ENCODE measurements at regions of chr20 and their contacts with region 1.

Region 1: GRCh38 chr20:46174469-46175128 is 56.5 kb downstream of the CD40 start:
- DNase-seq: peak; percentile 58 to 86 (median 77)
- ATAC-seq: peak in 3 of 4 donors; percentile 68 to 85 (median 80)
- H3K4me3 ChIP-seq: peak overlapping the region in 1 of 12 donors; percentile 33
- H3K27ac ChIP-seq: no peak overlapping the region
- H3K4me1 ChIP-seq: peaks cover 0 to 9% (median 0%) of the 10 kb centered on the region in 12 donors
- H3K27me3 ChIP-seq: peaks cover 18 to 62% (median 34%) of the 10 kb centered on the region in 9 donors
- CTCF ChIP-seq: peak; percentile 45 to 85 (median 64)
- POLR2A ChIP-seq: no peak

Region 2: DNA sequence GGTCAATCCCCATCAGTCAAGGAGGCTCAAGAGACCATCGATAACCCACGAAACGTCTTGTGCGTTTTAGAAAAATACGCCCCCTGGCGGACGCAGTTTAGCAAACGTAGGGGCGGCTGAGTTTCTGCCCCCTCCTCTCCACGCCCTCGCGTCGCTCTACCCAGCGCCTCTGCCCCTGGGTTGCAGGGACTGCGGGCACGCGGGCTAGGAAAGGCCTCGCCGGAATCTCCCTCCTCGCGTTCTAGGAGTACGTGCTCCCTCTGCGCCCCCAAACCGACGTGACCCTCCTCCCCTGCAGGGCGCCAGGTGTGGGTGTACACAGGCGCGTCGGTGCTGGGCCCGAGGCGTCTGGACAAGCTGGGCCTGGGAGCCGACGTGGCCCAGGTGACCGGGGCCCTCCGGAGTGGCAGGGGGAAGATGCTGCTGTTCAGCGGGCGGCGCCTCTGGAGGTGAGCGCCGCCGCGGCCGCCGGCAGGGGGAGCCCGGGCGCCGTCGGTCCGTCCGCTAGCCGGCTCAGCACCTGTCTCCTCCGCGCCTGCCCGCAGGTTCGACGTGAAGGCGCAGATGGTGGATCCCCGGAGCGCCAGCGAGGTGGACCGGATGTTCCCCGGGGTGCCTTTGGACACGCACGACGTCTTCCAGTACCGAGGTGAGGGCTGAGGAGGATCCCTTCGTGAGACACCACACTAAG is 160.6 kb before region 1 on chr20:
- intact Hi-C with region 1: loop called in 3 of 10 experiments (anchors 2 to 10 kb)
- DNase-seq: peak in 3 of 5 donors; percentile 38 to 74 (median 42)
- ATAC-seq: peak in 3 of 4 donors; percentile 60 to 78 (median 67)
- H3K4me3 ChIP-seq: peak overlapping the region in 2 of 12 donors; percentile 26 to 31
- H3K27ac ChIP-seq: no peak overlapping the region
- H3K4me1 ChIP-seq: peaks cover 0 to 40% (median 0%) of the 10 kb centered on the region in 12 donors
- H3K27me3 ChIP-seq: peaks cover 50 to 97% (median 77%) of the 10 kb centered on the region in 9 donors
- CTCF ChIP-seq: peak; percentile 48 to 74 (median 62)
- POLR2A ChIP-seq: no peak

Region 3: GRCh38 chr20:46022411-46023147 is 152.0 kb before region 1 on chr20:
- intact Hi-C with region 1: loop called in 9 of 10 experiments (anchors 2 to 10 kb)
- DNase-seq: peak; percentile 46 to 84 (median 60)
- ATAC-seq: peak in 3 of 4 donors; percentile 54 to 73 (median 55)
- H3K4me3 ChIP-seq: peak overlapping the region in 5 of 12 donors; percentile 7 to 59 (median 15)
- H3K27ac ChIP-seq: no peak overlapping the region
- H3K4me1 ChIP-seq: peaks cover 0 to 21% (median 7%) of the 10 kb centered on the region in 12 donors
- H3K27me3 ChIP-seq: peaks cover 9 to 94% (median 51%) of the 10 kb centered on the region in 9 donors
- CTCF ChIP-seq: peak; percentile 47 to 72 (median 64)
- POLR2A ChIP-seq: no peak

Region 4: GRCh38 chr20:46139908-46140482 is 34.6 kb before region 1 on chr20:
- intact Hi-C with region 1: loop called in 1 of 10 experiments (anchors 5 kb)
- DNase-seq: no peak
- ATAC-seq: peak in 1 of 4 donors; percentile 16
- H3K4me3 ChIP-seq: no peak overlapping the region
- H3K27ac ChIP-seq: no peak overlapping the region
- H3K4me1 ChIP-seq: no peaks in the 10 kb centered on the region
- H3K27me3 ChIP-seq: peaks cover 6 to 78% (median 33%) of the 10 kb centered on the region in 9 donors
- CTCF ChIP-seq: no peak
- POLR2A ChIP-seq: no peak

Region 5: DNA sequence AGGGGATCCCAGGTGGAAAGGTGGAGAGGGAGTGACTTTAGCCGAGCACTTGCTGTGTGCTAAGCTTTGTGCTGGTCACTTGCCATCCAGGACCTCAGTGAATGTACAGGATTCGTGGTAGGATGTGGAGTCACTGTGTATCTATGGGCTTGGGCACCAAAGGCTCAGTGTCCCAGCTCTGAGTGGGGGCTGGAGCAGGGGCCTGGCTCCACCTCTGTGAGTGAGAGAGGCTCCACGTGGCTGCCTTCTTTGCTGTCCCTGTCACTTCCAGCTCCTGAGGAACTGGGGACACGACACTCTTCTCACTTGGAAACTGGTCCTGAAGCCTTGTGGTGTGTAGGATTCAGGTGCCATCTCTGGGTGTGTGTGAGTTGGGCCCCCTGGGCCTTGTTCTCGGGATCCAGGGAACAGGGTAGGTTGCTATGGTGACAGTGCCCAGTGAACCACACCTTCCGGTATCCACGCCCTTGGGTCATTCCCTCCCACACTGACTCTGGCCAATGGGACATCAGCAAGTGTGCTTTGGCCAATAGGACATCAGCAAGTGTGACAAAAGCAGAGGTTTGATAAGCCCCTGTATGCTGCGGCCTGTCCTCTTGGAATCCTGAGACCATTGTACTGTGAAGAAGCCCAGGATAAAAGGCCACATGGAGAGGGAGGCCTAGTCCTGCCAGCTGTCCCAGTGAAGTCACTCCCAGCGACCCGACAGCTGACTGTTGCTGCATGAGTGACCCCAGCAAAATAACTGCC is 46.0 kb after region 1 on chr20:
- intact Hi-C with region 1: loop called in 1 of 10 experiments (anchors 5 kb)
- DNase-seq: peak in 1 of 5 donors; percentile 67
- ATAC-seq: peak in 3 of 4 donors; percentile 35 to 64 (median 48)
- H3K4me3 ChIP-seq: no peak overlapping the region
- H3K27ac ChIP-seq: peak overlapping the region in 3 of 12 donors; percentile 47 to 89 (median 88)
- H3K4me1 ChIP-seq: peaks cover 0 to 40% (median 10%) of the 10 kb centered on the region in 12 donors
- H3K27me3 ChIP-seq: peaks cover 0 to 16% (median 0%) of the 10 kb centered on the region in 9 donors
- CTCF ChIP-seq: no peak
- POLR2A ChIP-seq: no peak

Region 6: DNA sequence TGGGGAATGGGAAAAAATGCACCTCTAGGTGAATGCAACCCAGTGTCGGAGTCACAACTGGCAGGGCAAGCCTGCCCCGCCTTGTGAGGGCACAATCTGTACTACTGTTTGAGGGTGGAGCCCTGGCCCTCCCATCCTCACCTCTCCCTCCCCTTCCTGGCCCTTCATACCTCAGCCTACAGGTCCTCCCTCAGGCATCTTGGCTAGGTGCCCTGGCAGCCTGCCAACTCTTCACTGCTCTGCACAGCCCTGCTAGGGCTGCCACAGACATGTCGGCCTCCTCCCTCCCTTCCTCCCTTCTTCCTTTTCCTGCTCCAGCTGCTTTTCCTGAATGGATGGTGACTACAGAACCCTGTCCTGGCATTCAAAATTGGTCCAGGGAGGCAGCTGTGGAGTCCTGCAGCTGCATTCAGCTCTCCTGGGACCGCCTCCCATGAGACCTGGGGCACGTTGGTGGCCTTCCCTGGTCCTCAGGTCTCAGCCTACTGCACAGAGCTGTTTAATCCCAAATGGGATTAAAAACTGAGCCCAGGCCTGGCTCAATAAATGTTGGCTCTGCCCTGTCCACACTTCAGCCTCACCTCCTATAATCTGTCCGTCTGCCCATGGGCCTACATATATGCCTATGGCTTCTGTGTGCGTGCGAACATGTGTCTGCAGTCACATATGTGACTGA is 81.0 kb after region 1 on chr20:
- intact Hi-C with region 1: loop called in 1 of 10 experiments (anchors 10 kb)
- DNase-seq: peak; percentile 64 to 88 (median 79)
- ATAC-seq: peak; percentile 74 to 90 (median 82)
- H3K4me3 ChIP-seq: no peak overlapping the region
- H3K27ac ChIP-seq: no peak overlapping the region
- H3K4me1 ChIP-seq: peaks cover 0 to 13% (median 1%) of the 10 kb centered on the region in 12 donors
- H3K27me3 ChIP-seq: peaks cover 14 to 63% (median 27%) of the 10 kb centered on the region in 9 donors
- CTCF ChIP-seq: no peak
- POLR2A ChIP-seq: no peak

Measured in heart left ventricle (tissue), 16 donors.